ENCODE measurements at regions of chr19 and their contacts with region 1.

Region 1: DNA sequence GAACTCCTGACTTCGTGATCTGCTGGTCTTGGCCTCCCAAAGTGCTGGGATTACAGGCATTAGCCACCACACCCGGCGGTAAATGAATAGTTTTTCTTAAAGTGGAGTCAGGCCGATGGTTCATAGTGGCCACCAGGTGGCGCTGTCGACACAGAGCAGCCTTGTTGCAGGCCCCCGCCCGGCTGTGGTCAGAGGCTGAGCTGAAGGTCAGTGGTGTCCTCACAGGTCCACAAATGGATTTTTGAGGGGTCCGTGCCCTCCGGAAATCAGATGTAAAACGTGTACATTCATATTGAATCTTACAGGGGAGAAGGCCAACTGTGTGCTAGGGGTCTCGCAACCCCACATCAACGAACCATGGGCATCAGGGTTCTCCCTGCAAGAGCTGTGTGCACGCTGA is 13.4 kb upstream of the WDR18 start:
- DNase-seq: peak in 2 of 9 experiments; percentile 27 to 37
- ATAC-seq: no peak
- H3K4me3 ChIP-seq: no peak overlapping the region
- H3K4me3 Mint-ChIP-seq: no peak overlapping the region
- H3K27ac ChIP-seq: no peak overlapping the region
- H3K27ac Mint-ChIP-seq: no peak overlapping the region
- H3K4me1 ChIP-seq: no peaks in the 10 kb centered on the region
- H3K4me1 Mint-ChIP-seq: no peaks in the 10 kb centered on the region
- H3K27me3 ChIP-seq: no peaks in the 10 kb centered on the region
- H3K27me3 Mint-ChIP-seq: no peaks in the 10 kb centered on the region
- CTCF ChIP-seq: peak; percentile 62

Region 2: DNA sequence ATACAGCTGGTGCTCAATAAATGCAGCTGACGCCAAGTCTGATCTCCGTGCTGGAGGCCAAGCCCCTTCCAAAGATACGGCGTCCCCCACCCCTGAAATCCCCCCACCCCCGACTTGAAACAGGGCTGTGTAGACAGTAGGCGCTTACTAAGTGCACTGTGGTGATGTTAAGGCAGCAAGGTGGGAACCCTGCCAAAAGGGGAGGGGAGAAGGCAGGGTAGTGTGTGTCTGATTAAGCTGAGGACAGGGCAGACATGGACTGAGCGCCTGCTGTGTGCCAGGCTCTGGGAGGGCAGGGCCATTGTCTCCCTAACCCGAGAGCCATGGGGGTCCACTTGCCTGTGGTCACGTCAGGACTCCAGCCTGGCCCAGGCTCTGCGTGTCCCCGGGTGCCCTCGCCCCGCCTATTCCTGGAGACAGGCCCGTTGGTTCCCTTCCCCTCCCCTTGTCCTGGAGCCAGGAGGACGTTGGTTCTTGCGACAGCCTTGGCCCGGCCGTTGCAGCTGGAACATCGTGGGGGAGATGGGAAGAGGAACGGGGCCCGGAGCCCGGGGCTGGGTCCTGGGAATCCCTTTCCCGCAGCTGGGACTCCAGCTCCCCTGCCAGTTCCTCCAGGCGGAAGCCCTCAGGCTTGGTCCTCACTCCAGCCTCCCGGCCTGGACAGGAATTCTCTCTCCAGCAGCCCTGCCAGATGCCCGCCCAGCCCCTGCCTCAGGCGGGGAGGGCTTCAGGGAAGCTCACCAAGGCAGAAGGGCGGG is 120.3 kb before region 1 on chr19:
- CTCF ChIA-PET with region 1: no interaction called
- POLR2A ChIA-PET with region 1: no interaction called
- intact Hi-C with region 1: loop called in 1 of 2 experiments (anchors 5 kb)
- DNase-seq: peak in 1 of 9 experiments; percentile 21
- ATAC-seq: no peak
- H3K4me3 ChIP-seq: no peak overlapping the region
- H3K4me3 Mint-ChIP-seq: no peak overlapping the region
- H3K27ac ChIP-seq: no peak overlapping the region
- H3K27ac Mint-ChIP-seq: no peak overlapping the region
- H3K4me1 ChIP-seq: no peaks in the 10 kb centered on the region
- H3K4me1 Mint-ChIP-seq: no peaks in the 10 kb centered on the region
- H3K27me3 ChIP-seq: peaks cover 0 to 16% of the 10 kb centered on the region in 2 experiments
- H3K27me3 Mint-ChIP-seq: peaks cover 27% of the 10 kb centered on the region
- CTCF ChIP-seq: no peak

Region 3: GRCh38 chr19:933216-933882 is 37.3 kb before region 1 on chr19:
- CTCF ChIA-PET with region 1: no interaction called
- POLR2A ChIA-PET with region 1: no interaction called
- intact Hi-C with region 1: loop called in 1 of 2 experiments (anchors 2 kb)
- DNase-seq: no peak
- ATAC-seq: no peak
- H3K4me3 ChIP-seq: peak overlapping the region in 1 of 2 experiments; percentile 8
- H3K4me3 Mint-ChIP-seq: peak overlapping the region; percentile 71
- H3K27ac ChIP-seq: no peak overlapping the region
- H3K27ac Mint-ChIP-seq: no peak overlapping the region
- H3K4me1 ChIP-seq: peaks cover 34% of the 10 kb centered on the region
- H3K4me1 Mint-ChIP-seq: peaks cover 29% of the 10 kb centered on the region
- H3K27me3 ChIP-seq: no peaks in the 10 kb centered on the region
- H3K27me3 Mint-ChIP-seq: no peaks in the 10 kb centered on the region
- CTCF ChIP-seq: no peak

Measured in CD8-positive, alpha-beta T cell (primary cell).